A673 (cell line): ENCODE measurements at regions of chr7 and their contacts with region 1.

Region 1: GRCh38 chr7:26681819-26682418 is 182.5 kb downstream of the SKAP2 start:
- DNase-seq: peak; percentile 37
- H3K4me3 ChIP-seq: no peak overlapping the region
- H3K27ac ChIP-seq: no peak overlapping the region
- H3K4me1 ChIP-seq: no peaks in the 10 kb centered on the region
- H3K27me3 ChIP-seq: peaks cover 57% of the 10 kb centered on the region
- CTCF ChIP-seq: peak; percentile 80

Region 2: GRCh38 chr7:26413012-26413691 is 268.8 kb before region 1 on chr7:
- CTCF ChIA-PET with region 1: no interaction called
- POLR2A ChIA-PET with region 1: no interaction called
- intact Hi-C with region 1: no loop called
- DNase-seq: no peak
- H3K4me3 ChIP-seq: no peak overlapping the region
- H3K27ac ChIP-seq: no peak overlapping the region
- H3K4me1 ChIP-seq: no peaks in the 10 kb centered on the region
- H3K27me3 ChIP-seq: peaks cover 16% of the 10 kb centered on the region
- CTCF ChIP-seq: no peak

Region 3: DNA sequence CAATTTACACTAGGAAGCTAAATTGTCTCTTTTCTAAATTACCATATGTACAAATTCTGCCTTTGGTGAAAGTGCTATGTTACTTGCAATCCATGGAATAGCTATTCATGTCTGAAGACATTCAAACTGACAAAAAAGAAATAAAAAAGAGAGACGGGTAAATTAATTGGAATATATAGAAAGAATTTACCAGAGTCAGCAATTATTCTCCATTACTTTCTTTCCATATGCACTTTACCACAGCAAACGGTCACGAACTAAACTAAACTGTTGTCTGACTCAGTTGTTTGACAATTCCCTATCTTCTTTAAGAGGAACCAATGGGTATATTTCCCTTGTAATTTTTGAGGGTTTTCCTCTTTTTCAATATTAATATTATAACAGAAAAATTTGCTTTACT is 328.1 kb after region 1 on chr7:
- CTCF ChIA-PET with region 1: no interaction called
- POLR2A ChIA-PET with region 1: no interaction called
- intact Hi-C with region 1: no loop called
- DNase-seq: no peak
- H3K4me3 ChIP-seq: no peak overlapping the region
- H3K27ac ChIP-seq: no peak overlapping the region
- H3K4me1 ChIP-seq: no peaks in the 10 kb centered on the region
- H3K27me3 ChIP-seq: peaks cover 4% of the 10 kb centered on the region
- CTCF ChIP-seq: no peak

Region 4: DNA sequence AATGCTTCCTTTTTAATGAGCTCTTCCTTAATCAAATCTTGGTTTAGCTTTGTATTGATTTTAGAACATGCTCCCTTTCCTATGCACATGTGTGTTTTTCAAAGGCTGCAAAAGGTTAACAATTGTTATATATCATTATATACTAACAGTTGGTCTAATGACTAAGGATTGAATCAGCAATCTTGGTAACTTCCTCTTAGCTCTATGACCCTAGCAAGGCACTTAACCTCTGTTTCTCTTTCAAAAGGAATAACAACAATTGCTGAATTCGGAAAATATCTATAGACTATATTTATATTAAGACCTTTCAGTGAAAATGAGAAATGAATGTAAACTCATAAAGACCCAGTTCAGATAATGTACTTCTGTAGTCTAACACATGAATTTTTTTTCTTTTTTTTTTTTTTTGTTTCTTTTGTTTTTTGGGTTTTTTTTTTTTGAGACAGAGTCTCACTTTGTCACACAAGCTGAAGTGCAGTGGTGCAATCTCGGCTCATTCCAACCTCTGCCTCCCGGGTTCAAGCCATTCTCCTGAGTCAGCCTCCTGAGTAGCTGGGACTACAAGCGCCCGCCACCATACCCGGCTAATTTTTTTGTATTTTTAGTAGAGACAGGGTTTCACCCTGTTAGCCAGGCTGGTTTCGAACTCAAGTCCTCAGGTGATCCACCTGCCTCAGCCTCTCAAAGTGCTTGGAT is 365.1 kb after region 1 on chr7:
- CTCF ChIA-PET with region 1: no interaction called
- POLR2A ChIA-PET with region 1: interaction called, 11 read pairs
- intact Hi-C with region 1: no loop called
- DNase-seq: no peak
- H3K4me3 ChIP-seq: no peak overlapping the region
- H3K27ac ChIP-seq: no peak overlapping the region
- H3K4me1 ChIP-seq: no peaks in the 10 kb centered on the region
- H3K27me3 ChIP-seq: no peaks in the 10 kb centered on the region
- CTCF ChIP-seq: no peak

Region 5: GRCh38 chr7:27160546-27161213 is 478.8 kb after region 1 on chr7:
- CTCF ChIA-PET with region 1: interaction called, 9 read pairs
- POLR2A ChIA-PET with region 1: no interaction called
- intact Hi-C with region 1: loop called (anchors 2 kb)
- DNase-seq: peak; percentile 87
- H3K4me3 ChIP-seq: peak overlapping the region; percentile 50
- H3K27ac ChIP-seq: no peak overlapping the region
- H3K4me1 ChIP-seq: peaks cover 4% of the 10 kb centered on the region
- H3K27me3 ChIP-seq: peaks cover 61% of the 10 kb centered on the region
- CTCF ChIP-seq: peak; percentile 96